ENCODE measurements at regions of chr11 and their contacts with region 1.

Region 1: DNA sequence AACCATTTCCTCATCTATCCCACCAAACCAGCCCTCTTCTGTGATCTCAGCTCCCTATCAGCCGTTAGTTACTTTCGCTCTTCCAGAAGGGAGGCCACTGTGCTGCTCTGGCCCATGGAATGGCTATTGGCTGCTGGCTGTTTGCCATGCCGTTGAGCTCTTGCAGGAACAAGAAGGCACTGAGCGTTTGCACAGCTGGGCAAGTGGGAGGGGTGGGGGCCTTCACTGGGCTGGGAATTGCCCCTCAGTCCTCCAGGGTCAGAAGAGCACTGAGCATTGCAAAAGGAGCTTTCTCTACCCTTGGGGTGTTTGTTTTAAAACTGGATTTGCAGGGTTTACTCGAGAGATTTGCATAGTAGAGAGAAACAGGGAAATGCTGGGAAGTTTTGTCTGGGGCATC is 129.0 kb upstream of the PARVA start:
- DNase-seq: no peak
- H3K4me3 ChIP-seq: no peak overlapping the region
- H3K27ac ChIP-seq: no peak overlapping the region
- H3K4me1 ChIP-seq: peaks cover 29% of the 10 kb centered on the region
- H3K27me3 ChIP-seq: no peaks in the 10 kb centered on the region
- CTCF ChIP-seq: no peak
- POLR2A ChIP-seq: no peak

Region 2: DNA sequence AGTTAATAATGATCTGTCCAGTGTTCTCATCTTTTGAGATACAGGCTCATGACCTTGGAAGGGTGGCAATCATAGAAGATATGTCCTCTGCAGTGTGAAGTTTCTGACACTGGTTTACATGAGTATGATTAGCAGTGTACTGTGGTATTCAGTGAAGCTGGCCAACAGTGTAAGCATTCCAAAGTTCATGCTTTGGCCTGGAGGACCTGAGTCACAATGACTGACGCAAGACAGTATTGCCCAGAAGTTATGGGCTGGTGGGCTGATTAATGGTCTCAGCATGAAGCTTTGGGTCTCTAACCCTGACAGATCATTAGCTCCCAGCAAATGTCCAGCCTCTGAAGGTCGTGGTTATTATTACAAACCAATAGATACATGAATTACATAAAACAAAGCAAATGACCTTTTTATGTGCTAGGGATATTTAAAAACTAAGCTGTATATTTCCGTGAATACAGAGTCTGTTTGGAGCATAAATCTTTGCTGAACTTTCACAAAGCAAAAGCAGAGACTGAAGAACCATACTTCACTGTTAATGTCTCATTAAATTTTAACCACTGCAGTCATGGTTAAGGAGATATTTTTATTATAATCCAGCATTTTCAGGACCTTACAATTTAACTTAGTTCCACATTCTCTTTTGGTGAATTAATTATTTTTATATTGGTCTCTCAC is 434.9 kb before region 1 on chr11:
- intact Hi-C with region 1: loop called (anchors 10 kb)
- DNase-seq: no peak
- H3K4me3 ChIP-seq: no peak overlapping the region
- H3K27ac ChIP-seq: peak overlapping the region; percentile 15
- H3K4me1 ChIP-seq: no peaks in the 10 kb centered on the region
- H3K27me3 ChIP-seq: no peaks in the 10 kb centered on the region
- CTCF ChIP-seq: no peak
- POLR2A ChIP-seq: no peak

Region 3: DNA sequence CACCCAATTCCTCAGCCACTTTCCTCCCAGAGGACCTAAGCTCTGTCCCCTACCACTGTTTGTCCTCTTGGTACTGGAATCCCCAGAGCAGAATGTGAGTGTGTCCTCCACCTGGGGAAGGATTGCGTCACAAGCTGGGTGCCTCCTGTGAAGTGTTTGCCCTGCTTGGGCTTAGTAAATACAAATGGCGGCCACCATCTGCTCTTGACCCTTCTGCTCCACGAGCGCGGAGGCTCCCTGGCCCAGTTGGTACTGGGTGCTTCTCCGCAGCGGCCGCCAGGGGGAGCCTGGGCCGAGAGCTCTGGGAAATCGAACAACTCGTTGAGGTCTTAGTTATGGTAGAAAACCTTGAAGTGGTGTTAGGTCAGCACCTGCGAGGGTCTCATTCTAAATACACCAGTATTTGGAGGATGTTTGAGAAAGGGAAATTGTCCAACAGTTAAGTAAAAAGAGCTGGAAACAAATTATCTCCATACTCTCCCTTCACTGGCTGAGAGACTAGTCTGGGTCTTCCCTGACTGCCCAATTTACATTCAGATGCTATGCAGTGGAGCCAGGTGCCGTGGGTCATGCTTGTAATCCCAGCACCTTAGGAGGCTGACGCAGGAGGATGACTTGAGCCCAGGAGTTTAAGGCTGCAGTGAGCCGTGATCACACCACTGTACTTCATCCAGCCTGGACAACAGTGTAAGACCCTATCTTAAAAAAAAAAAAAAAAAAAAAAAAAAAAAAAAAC is 351.2 kb after region 1 on chr11:
- intact Hi-C with region 1: no loop called
- DNase-seq: no peak
- H3K4me3 ChIP-seq: no peak overlapping the region
- H3K27ac ChIP-seq: no peak overlapping the region
- H3K4me1 ChIP-seq: no peaks in the 10 kb centered on the region
- H3K27me3 ChIP-seq: no peaks in the 10 kb centered on the region
- CTCF ChIP-seq: peak; percentile 23 to 48 (median 34)
- POLR2A ChIP-seq: no peak